ENCODE measurements at regions of chr5 and their contacts with region 1.

Region 1: DNA sequence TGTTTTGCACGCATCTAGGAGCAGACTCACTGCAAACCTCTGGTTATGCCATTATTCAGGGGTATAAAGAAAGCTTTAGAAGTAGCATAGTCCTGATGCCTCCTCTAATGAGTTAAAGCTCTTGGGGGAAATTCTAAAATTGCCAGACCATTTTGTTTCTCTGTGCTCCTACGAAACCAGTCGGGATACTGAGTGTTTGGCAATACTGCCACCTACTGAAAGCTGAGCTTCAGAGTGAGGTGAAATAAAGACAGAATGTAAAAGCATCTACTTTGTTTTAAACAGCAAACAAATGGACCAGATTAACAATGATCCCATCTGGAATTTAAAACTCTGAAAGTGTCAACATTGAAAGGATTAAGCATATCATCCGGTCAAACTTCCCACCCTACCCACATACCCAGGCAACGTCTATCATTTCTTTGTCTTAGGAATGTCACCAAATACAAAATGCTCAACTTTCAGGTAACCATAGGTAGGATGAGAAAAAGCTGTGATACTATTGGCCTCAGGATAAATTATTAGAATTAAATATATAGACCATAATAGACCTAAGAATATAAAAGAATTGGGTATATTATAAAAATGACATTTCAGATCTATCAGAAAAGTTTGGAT is 77.8 kb upstream of the SHISAL2B start:
- DNase-seq: no peak
- H3K4me3 ChIP-seq: no peak overlapping the region
- CTCF ChIP-seq: peak; percentile 62

Region 2: GRCh38 chr5:64595031-64595855 is 17.2 kb before region 1 on chr5:
- CTCF ChIA-PET with region 1: interaction called, 19 read pairs
- POLR2A ChIA-PET with region 1: no interaction called
- DNase-seq: no peak
- H3K4me3 ChIP-seq: no peak overlapping the region
- CTCF ChIP-seq: no peak

Region 3: GRCh38 chr5:64625678-64626077 is 13.2 kb after region 1 on chr5:
- CTCF ChIA-PET with region 1: interaction called, 12 read pairs
- POLR2A ChIA-PET with region 1: no interaction called
- DNase-seq: no peak
- H3K4me3 ChIP-seq: no peak overlapping the region
- CTCF ChIP-seq: no peak

Measured in AG04449 (cell line).